Activated CD8-positive, alpha-beta T cell treated with anti-CD3 and anti-CD28 coated beads for 36 hours (primary cell): ENCODE measurements at regions of chr9 and their contacts with region 1.

Region 1: DNA sequence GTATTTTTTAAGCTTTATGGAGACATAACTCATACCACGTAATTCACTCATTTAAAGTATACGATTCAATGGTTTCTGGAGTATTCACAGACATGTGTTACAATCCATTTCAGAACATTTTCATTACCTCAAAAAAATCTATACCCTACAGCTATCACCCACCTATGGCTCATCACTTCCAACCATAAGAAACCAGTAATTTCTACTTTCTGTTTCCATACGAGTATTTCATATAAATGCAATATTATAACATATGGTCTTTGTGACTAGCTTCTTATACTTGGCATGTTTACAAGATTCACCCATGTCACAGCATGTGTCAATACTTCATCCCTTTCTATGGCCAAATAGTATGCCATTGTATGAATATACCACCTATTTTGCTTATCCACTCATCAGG is 18.8 kb downstream of the UBQLN1 start:
- DNase-seq: no peak
- ATAC-seq: peak; percentile 91
- H3K4me3 Mint-ChIP-seq: no peak overlapping the region
- H3K27ac Mint-ChIP-seq: peak overlapping the region; percentile 60
- H3K4me1 Mint-ChIP-seq: peaks cover 69% of the 10 kb centered on the region
- H3K27me3 Mint-ChIP-seq: no peaks in the 10 kb centered on the region
- CTCF ChIP-seq: no peak

Region 2: GRCh38 chr9:82797534-82797933 is 891.4 kb before region 1 on chr9:
- CTCF ChIA-PET with region 1: no interaction called
- POLR2A ChIA-PET with region 1: no interaction called
- intact Hi-C with region 1: no loop called
- DNase-seq: no peak
- ATAC-seq: no peak
- H3K4me3 Mint-ChIP-seq: no peak overlapping the region
- H3K27ac Mint-ChIP-seq: no peak overlapping the region
- H3K4me1 Mint-ChIP-seq: no peaks in the 10 kb centered on the region
- H3K27me3 Mint-ChIP-seq: no peaks in the 10 kb centered on the region
- CTCF ChIP-seq: no peak

Region 3: DNA sequence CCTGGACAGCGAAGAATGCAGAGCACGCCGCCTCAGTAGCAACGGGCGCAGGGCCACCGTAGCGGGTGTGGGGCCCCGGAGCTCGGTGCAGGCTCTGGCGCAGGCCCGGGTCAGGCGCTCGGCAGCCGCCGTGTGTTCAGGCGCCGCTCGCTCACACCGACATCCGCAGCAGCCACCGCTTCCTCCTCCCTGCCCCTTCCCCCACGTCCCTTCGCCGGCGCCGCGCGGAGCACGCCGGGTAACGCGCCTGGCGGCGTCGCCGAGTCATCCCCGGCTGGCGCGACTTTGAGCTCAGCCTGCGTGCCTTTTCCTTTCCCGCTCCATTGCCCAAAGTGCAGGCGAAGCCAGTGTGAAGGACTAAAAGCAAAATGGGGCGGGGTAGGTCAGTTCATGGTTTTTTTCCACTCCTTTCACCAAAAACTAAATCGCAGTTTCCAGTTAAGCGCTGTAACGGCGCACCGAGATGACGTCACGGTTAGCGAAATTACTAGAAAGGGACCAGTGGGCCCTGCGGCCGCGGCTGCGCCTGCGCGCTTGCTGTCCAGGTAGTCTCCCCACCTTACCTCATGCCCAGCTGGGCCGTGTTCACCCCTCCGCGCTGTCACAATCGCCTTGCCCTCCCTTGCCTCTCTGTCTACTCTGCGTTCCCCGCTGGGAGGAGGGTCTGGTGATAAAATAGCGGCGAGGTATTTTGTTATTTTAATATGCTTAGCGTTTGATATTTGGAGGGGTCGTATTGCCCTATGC is 19.0 kb after region 1 on chr9 and contains the start of gene UBQLN1:
- CTCF ChIA-PET with region 1: interaction called, 3 read pairs
- POLR2A ChIA-PET with region 1: interaction called, 25 read pairs
- intact Hi-C with region 1: loop called (anchors 2 kb)
- DNase-seq: peak; percentile 96
- ATAC-seq: peak; percentile 78
- H3K4me3 Mint-ChIP-seq: peak within 1 kb of the TSS; percentile 86
- H3K27ac Mint-ChIP-seq: peak within 1 kb of the TSS; percentile 98
- H3K4me1 Mint-ChIP-seq: peaks cover 34% of the 10 kb centered on the region
- H3K27me3 Mint-ChIP-seq: no peaks in the 10 kb centered on the region
- CTCF ChIP-seq: no peak
- total RNA-seq, gene UBQLN1: 80.1 to 92.9 TPM

Region 4: GRCh38 chr9:83744212-83744611 is 55.3 kb after region 1 on chr9:
- CTCF ChIA-PET with region 1: no interaction called
- POLR2A ChIA-PET with region 1: no interaction called
- intact Hi-C with region 1: loop called (anchors 10 kb)
- DNase-seq: no peak
- ATAC-seq: no peak
- H3K4me3 Mint-ChIP-seq: no peak overlapping the region
- H3K27ac Mint-ChIP-seq: no peak overlapping the region
- H3K4me1 Mint-ChIP-seq: peaks cover 3% of the 10 kb centered on the region
- H3K27me3 Mint-ChIP-seq: no peaks in the 10 kb centered on the region
- CTCF ChIP-seq: no peak